CD14-positive monocyte (primary cell): ENCODE measurements at regions of chr4 and their contacts with region 1.

Region 1: GRCh38 chr4:1167247-1167949 is 5.0 kb downstream of the SPON2 start:
- DNase-seq: peak; percentile 89 to 94 (median 93)
- H3K4me3 ChIP-seq: peak overlapping the region; percentile 69 to 89 (median 86)
- H3K4me3 Mint-ChIP-seq: peak overlapping the region; percentile 84 to 87
- H3K27ac ChIP-seq: peak overlapping the region in 1 of 2 donors; percentile 75
- H3K27ac Mint-ChIP-seq: peak overlapping the region in 6 of 7 donors; percentile 54 to 86 (median 68)
- H3K4me1 ChIP-seq: peaks cover 45 to 60% of the 10 kb centered on the region in 2 donors
- H3K4me1 Mint-ChIP-seq: peaks cover 44% of the 10 kb centered on the region
- H3K27me3 ChIP-seq: peaks cover 16 to 46% of the 10 kb centered on the region in 2 donors
- H3K27me3 Mint-ChIP-seq: peaks cover 30 to 48% (median 47%) of the 10 kb centered on the region in 3 donors
- CTCF ChIP-seq: peak; percentile 98

Region 2: DNA sequence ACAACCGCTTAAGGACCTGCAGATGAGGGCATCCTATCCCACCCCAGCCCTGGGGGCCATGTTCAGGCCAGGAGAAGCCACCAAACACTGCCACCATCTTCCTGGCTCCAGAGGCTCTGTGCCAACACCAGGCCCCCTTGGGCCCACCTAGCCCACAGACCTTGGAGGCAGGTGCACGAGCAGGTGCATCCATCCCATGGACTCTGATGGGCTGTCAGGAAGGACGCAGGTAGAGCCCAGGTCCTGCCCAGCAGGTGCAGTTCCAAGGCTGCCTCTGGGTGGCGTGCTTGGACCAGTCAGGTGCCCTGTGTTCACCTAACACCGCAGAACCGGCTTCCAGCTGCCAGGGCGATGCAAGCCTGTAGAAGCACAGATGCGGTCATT is 564.8 kb before region 1 on chr4:
- intact Hi-C with region 1: no loop called
- DNase-seq: no peak
- H3K4me3 ChIP-seq: no peak overlapping the region
- H3K4me3 Mint-ChIP-seq: no peak overlapping the region
- H3K27ac ChIP-seq: no peak overlapping the region
- H3K27ac Mint-ChIP-seq: no peak overlapping the region
- H3K4me1 ChIP-seq: no peaks in the 10 kb centered on the region
- H3K4me1 Mint-ChIP-seq: no peaks in the 10 kb centered on the region
- H3K27me3 ChIP-seq: no peaks in the 10 kb centered on the region
- H3K27me3 Mint-ChIP-seq: peaks cover under 1 to 12% (median 2%) of the 10 kb centered on the region in 3 donors
- CTCF ChIP-seq: peak; percentile 34

Region 3: DNA sequence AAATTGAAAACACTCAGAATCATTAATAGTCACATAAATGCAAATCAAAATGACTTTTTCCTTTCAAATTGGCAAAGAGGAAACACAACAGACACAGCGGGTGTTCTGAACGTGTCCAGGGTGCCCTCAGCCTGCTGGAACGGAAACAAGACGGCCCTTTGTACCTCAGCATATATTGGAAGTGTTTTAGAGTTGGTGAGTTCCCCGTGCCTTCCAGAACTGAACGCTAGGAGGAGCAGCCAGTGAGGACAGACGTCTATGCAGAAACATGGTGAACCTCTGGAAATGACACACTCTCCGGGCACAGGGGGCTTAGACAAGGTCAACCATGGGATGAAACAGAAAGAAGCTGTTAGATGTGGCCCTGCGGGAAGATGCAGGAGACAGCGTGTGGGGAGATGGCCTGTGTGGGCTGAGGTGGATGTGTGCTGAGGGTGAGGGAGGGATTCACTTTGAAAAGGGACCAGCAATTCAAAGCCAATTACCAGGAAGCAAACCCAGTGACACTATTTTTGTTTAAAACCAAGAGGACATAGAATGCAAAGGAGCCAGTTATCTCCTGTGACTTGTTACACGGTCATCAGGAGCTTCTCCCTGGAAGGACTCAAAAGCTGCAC is 94.5 kb before region 1 on chr4:
- intact Hi-C with region 1: no loop called
- DNase-seq: peak; percentile 52 to 69 (median 61)
- H3K4me3 ChIP-seq: no peak overlapping the region
- H3K4me3 Mint-ChIP-seq: no peak overlapping the region
- H3K27ac ChIP-seq: no peak overlapping the region
- H3K27ac Mint-ChIP-seq: peak overlapping the region in 3 of 7 donors; percentile 4 to 24 (median 5)
- H3K4me1 ChIP-seq: no peaks in the 10 kb centered on the region
- H3K4me1 Mint-ChIP-seq: peaks cover 6% of the 10 kb centered on the region
- H3K27me3 ChIP-seq: no peaks in the 10 kb centered on the region
- H3K27me3 Mint-ChIP-seq: peaks cover 10 to 27% (median 14%) of the 10 kb centered on the region in 3 donors
- CTCF ChIP-seq: peak; percentile 82

Region 4: GRCh38 chr4:1130316-1131186 is 36.8 kb before region 1 on chr4:
- intact Hi-C with region 1: loop called in 1 of 2 experiments (anchors 5 kb)
- DNase-seq: peak; percentile 72 to 75 (median 73)
- H3K4me3 ChIP-seq: no peak overlapping the region
- H3K4me3 Mint-ChIP-seq: no peak overlapping the region
- H3K27ac ChIP-seq: no peak overlapping the region
- H3K27ac Mint-ChIP-seq: peak overlapping the region in 1 of 7 donors; percentile 75
- H3K4me1 ChIP-seq: peaks cover under 1 to 8% of the 10 kb centered on the region in 2 donors
- H3K4me1 Mint-ChIP-seq: peaks cover 8% of the 10 kb centered on the region
- H3K27me3 ChIP-seq: peaks cover 0 to 3% of the 10 kb centered on the region in 2 donors
- H3K27me3 Mint-ChIP-seq: peaks cover 13 to 27% (median 18%) of the 10 kb centered on the region in 3 donors
- CTCF ChIP-seq: peak; percentile 96

Region 5: DNA sequence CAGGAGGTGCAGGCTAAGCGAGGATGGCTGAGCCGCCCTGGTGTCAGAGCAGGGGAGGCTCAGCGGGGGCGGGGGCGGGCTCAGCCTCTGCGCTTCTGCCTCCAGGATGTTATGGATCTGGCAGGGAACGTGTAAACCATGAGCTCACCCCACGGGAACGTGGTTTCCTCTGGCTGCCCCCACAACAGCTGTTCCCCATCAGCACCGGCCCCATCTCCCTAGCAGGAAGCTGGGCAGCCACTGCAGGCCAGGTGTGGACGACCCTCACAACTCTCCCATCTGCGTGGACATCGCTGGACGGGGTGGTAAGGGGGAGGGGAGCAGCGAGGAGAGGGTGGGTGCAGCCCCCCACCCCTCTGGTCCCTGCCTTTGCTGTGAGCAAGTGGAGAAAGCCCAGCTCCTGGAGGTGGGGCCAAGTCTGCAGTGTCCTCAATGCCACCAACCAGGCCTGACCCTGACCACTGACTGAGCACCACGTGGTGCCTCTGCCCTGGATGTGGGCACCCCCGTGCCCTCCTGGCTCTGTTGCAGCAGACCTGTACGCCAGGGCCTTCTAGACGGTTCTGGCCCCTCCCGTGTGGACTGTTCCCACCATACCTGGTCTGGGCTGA is 33.1 kb after region 1 on chr4:
- intact Hi-C with region 1: loop called in 1 of 2 experiments (anchors 5 kb)
- DNase-seq: no peak
- H3K4me3 ChIP-seq: peak overlapping the region in 2 of 3 experiments; percentile 42 to 72
- H3K4me3 Mint-ChIP-seq: peak overlapping the region; percentile 80 to 88
- H3K27ac ChIP-seq: no peak overlapping the region
- H3K27ac Mint-ChIP-seq: no peak overlapping the region
- H3K4me1 ChIP-seq: peaks cover 28 to 30% of the 10 kb centered on the region in 2 donors
- H3K4me1 Mint-ChIP-seq: peaks cover 31% of the 10 kb centered on the region
- H3K27me3 ChIP-seq: no peaks in the 10 kb centered on the region
- H3K27me3 Mint-ChIP-seq: peaks cover 0 to 6% (median 3%) of the 10 kb centered on the region in 3 donors
- CTCF ChIP-seq: no peak

Region 6: GRCh38 chr4:1218634-1219565 is 51.5 kb after region 1 on chr4:
- intact Hi-C with region 1: loop called (anchors 2 to 10 kb)
- DNase-seq: peak; percentile 28 to 55 (median 34)
- H3K4me3 ChIP-seq: peak overlapping the region in 1 of 3 experiments; percentile 39
- H3K4me3 Mint-ChIP-seq: peak overlapping the region; percentile 44 to 77
- H3K27ac ChIP-seq: peak overlapping the region; percentile 57 to 75
- H3K27ac Mint-ChIP-seq: peak overlapping the region; percentile 68 to 92 (median 86)
- H3K4me1 ChIP-seq: peaks cover 32 to 41% of the 10 kb centered on the region in 2 donors
- H3K4me1 Mint-ChIP-seq: peaks cover 45% of the 10 kb centered on the region
- H3K27me3 ChIP-seq: no peaks in the 10 kb centered on the region
- H3K27me3 Mint-ChIP-seq: no peaks in the 10 kb centered on the region
- CTCF ChIP-seq: no peak

Region 7: DNA sequence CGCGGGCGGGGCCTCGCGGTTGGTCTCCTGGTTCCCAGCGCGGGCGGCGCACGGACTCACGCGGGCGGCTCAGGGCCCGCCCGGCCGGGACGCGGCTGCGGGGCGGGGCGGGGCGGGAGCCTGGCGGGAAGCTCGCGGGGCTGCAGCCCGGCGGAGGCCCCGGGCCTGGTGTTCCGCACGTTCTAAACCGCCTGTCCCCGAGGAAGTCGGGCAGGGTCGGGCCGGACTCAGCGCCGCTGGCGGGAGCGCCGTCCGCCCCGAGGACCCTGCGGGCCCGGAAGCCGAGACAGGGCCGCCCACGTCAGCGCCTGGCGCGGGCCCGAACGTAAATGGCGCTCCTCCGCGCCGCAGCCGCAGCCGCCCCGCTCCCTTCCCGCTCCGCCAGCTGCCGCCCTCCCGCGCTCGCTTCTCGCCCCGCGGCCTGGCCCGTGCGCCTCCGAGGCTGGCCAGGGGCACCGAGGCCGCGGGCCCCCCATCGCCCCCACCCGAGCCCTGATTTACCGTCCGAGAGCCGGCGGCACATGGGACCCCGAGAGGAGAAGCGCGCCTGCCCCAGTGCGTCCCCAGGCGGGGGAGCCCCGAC is 81.8 kb after region 1 on chr4:
- intact Hi-C with region 1: loop called in 1 of 2 experiments (anchors 5 kb)
- DNase-seq: peak; percentile 75 to 83 (median 82)
- H3K4me3 ChIP-seq: peak overlapping the region; percentile 62 to 81 (median 79)
- H3K4me3 Mint-ChIP-seq: peak overlapping the region; percentile 83 to 88
- H3K27ac ChIP-seq: peak overlapping the region; percentile 81 to 88
- H3K27ac Mint-ChIP-seq: peak overlapping the region; percentile 76 to 93 (median 89)
- H3K4me1 ChIP-seq: peaks cover 31 to 40% of the 10 kb centered on the region in 2 donors
- H3K4me1 Mint-ChIP-seq: peaks cover 40% of the 10 kb centered on the region
- H3K27me3 ChIP-seq: no peaks in the 10 kb centered on the region
- H3K27me3 Mint-ChIP-seq: peaks cover 0 to 6% (median 0%) of the 10 kb centered on the region in 3 donors
- CTCF ChIP-seq: no peak

Region 8: DNA sequence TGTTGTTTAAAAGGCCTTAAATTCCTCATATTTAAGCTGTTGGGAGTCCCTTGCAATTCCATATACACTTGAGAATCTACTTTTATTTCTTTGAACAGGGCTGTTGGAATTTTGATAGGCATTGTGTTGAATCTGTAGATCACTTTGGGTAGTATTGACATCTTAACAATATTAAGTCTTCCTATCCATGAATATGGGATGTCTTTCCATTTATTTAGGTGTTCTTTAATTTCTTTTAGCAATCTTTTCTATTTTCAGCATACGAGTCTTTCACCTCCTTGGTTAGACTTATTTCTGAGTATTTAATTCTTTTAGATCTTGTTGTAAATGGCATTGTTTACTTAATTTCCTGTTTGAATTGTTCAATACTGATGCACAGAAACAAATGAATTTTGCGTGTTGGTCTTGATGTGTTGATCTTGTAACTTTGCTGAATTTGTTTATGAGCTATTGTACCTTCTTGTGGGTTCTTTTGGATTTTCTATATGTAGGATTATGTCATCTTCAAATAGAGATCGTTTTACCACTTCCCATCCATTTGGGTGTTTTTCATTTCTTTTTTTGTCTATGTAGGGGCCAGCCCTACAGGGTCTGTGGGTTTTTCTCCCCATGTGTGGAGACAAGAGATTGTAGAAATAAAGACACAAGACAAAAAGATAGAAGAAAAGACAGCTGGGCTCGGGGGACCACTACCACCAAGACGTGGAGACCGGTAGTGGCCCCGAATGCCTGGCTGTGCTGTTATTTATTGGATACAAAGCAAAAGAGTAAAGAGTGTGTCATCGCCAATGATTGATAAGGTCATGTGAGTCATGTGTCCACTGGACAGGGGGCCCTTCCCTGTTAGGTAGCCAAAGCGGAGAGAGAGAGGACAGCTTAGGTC is 99.7 kb after region 1 on chr4:
- intact Hi-C with region 1: loop called in 1 of 2 experiments (anchors 2 kb)
- DNase-seq: no peak
- H3K4me3 ChIP-seq: no peak overlapping the region
- H3K4me3 Mint-ChIP-seq: no peak overlapping the region
- H3K27ac ChIP-seq: no peak overlapping the region
- H3K27ac Mint-ChIP-seq: peak overlapping the region in 1 of 7 donors; percentile 5
- H3K4me1 ChIP-seq: no peaks in the 10 kb centered on the region
- H3K4me1 Mint-ChIP-seq: peaks cover 3% of the 10 kb centered on the region
- H3K27me3 ChIP-seq: no peaks in the 10 kb centered on the region
- H3K27me3 Mint-ChIP-seq: peaks cover 0 to 8% (median 0%) of the 10 kb centered on the region in 3 donors
- CTCF ChIP-seq: no peak